WTC11 (cell line): ENCODE measurements at regions of chr4 and their contacts with region 1.

Region 1: GRCh38 chr4:7843831-7844593 is 95.6 kb downstream of the AFAP1 start:
- DNase-seq: peak; percentile 91
- ATAC-seq: peak; percentile 97
- H3K4me3 Mint-ChIP-seq: no peak overlapping the region
- H3K27ac Mint-ChIP-seq: peak overlapping the region; percentile 89; the same call in 1 of the 2 replicates
- H3K4me1 Mint-ChIP-seq: peaks cover 35% of the 10 kb centered on the region
- H3K27me3 Mint-ChIP-seq: no peaks in the 10 kb centered on the region
- CTCF ChIP-seq: peak; percentile 77

Region 2: DNA sequence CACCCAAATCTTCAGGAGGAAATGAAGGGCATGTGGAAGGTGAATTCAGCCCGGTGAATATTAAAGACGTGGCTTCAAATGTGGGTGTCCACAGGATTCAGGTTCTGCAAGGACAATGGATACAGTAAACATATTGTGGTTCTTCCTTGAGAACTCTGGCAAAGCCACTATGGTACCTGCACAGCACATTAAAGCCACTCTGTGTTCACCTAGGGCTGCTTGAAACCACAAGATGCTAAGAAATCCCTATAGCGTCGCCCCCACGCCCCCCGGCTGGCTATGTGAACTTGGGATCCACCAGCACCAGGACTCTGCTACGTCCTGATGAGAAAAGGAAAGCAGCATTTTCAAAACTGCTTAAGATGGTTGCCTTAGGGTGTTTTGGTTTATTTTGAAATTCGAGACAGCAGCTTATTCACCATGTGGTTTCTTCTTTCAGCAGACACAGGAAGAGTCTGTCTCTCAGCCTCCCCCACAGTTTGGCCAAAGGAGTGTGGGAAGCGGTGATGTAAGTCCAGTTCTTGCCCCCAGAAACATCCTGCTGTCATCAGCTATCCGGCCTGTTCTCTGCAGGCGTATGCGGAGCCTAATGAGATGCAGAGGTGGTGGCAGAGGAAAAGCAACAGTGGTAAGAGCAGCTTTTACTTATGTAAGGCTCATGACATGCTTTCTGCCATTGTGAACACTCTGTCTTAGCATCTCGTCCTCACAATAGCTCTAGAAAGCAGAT is 15.9 kb before region 1 on chr4:
- CTCF ChIA-PET with region 1: interaction called, 15 read pairs
- POLR2A ChIA-PET with region 1: no interaction called
- DNase-seq: no peak
- ATAC-seq: peak; percentile 66; the same call in 1 of the 2 replicates
- H3K4me3 Mint-ChIP-seq: no peak overlapping the region; the same call in 1 of the 2 replicates
- H3K27ac Mint-ChIP-seq: peak overlapping the region; percentile 28
- H3K4me1 Mint-ChIP-seq: peaks cover 54% of the 10 kb centered on the region
- H3K27me3 Mint-ChIP-seq: no peaks in the 10 kb centered on the region
- CTCF ChIP-seq: no peak

Region 3: GRCh38 chr4:7861440-7861881 is 17.4 kb after region 1 on chr4:
- CTCF ChIA-PET with region 1: interaction called, 24 read pairs
- POLR2A ChIA-PET with region 1: no interaction called
- DNase-seq: peak; percentile 57
- ATAC-seq: peak; percentile 86
- H3K4me3 Mint-ChIP-seq: peak overlapping the region; percentile 47
- H3K27ac Mint-ChIP-seq: peak overlapping the region; percentile 98
- H3K4me1 Mint-ChIP-seq: peaks cover 72% of the 10 kb centered on the region
- H3K27me3 Mint-ChIP-seq: no peaks in the 10 kb centered on the region
- CTCF ChIP-seq: no peak

Region 4: GRCh38 chr4:7876201-7876875 is 32.3 kb after region 1 on chr4:
- CTCF ChIA-PET with region 1: interaction called, 18 read pairs
- POLR2A ChIA-PET with region 1: no interaction called
- DNase-seq: peak; percentile 54
- ATAC-seq: peak; percentile 98
- H3K4me3 Mint-ChIP-seq: no peak overlapping the region
- H3K27ac Mint-ChIP-seq: peak overlapping the region; percentile 6; the same call in 1 of the 2 replicates
- H3K4me1 Mint-ChIP-seq: peaks cover 54% of the 10 kb centered on the region
- H3K27me3 Mint-ChIP-seq: no peaks in the 10 kb centered on the region
- CTCF ChIP-seq: no peak

Region 5: DNA sequence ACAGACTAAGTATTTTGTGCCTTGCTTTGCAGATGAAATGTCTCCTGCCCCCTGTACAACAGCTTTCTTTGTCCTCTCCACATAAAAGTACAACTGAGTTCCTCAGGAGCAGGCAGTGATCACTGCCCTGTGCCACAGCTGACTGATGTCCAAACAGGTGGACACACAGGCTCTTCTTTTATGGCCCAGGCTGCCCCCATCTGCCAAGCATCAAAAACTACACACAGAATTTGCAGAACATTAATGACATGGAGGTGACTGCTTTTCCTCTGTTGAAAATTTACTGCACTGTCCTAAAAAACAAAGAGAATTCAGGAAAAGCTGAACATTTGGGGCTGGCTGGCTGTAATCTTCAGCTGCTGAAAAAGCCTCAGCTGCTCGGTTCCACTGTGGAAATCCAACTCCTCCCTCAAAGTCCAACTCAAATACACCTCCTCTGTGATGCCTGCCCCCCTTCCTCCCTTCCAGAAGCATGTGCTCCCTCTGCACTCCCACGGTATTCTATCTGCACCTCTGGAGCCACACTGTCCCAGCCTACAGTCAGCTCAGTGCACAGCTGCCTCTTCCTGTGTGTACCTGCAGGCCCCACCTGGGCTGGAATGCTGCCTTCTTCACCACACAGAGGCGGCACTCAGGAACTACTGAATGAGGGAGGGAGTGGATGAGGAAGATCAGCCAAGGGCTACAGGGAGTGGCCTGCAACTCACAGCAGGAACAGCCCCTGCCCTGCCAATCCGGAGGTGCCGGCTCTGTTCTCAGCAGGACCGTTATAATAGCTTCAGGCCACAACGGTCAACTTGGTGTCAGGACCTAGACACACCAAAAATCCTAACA is 85.3 kb after region 1 on chr4:
- CTCF ChIA-PET with region 1: interaction called, 14 read pairs
- POLR2A ChIA-PET with region 1: no interaction called
- DNase-seq: peak; percentile 35
- ATAC-seq: peak; percentile 94
- H3K4me3 Mint-ChIP-seq: no peak overlapping the region
- H3K27ac Mint-ChIP-seq: peak overlapping the region; percentile 83
- H3K4me1 Mint-ChIP-seq: peaks cover 26% of the 10 kb centered on the region
- H3K27me3 Mint-ChIP-seq: no peaks in the 10 kb centered on the region
- CTCF ChIP-seq: no peak

Region 6: GRCh38 chr4:7939377-7940108 is 95.5 kb after region 1 on chr4 and contains the start of gene AFAP1:
- CTCF ChIA-PET with region 1: interaction called, 27 read pairs
- POLR2A ChIA-PET with region 1: no interaction called
- DNase-seq: peak; percentile 94
- ATAC-seq: peak; percentile 91
- H3K4me3 Mint-ChIP-seq: peak within 1 kb of the TSS; percentile 77
- H3K27ac Mint-ChIP-seq: no peak within 1 kb of the TSS
- H3K4me1 Mint-ChIP-seq: peaks cover 47% of the 10 kb centered on the region
- H3K27me3 Mint-ChIP-seq: peaks cover 5% of the 10 kb centered on the region
- CTCF ChIP-seq: no peak
- total RNA-seq, gene AFAP1: 17.6 to 23.6 TPM (median 18.0 TPM) in 3 replicates

Region 7: GRCh38 chr4:7987148-7987989 is 143.4 kb after region 1 on chr4:
- CTCF ChIA-PET with region 1: interaction called, 11 read pairs
- POLR2A ChIA-PET with region 1: interaction called, 4 read pairs
- DNase-seq: peak; percentile 87
- ATAC-seq: peak; percentile 81
- H3K4me3 Mint-ChIP-seq: no peak overlapping the region
- H3K27ac Mint-ChIP-seq: peak overlapping the region; percentile 69; the same call in 1 of the 2 replicates
- H3K4me1 Mint-ChIP-seq: peaks cover 21% of the 10 kb centered on the region
- H3K27me3 Mint-ChIP-seq: no peaks in the 10 kb centered on the region
- CTCF ChIP-seq: peak; percentile 91